HCT116 (cell line): ENCODE measurements at regions of chr1 and their contacts with region 1.

Region 1: GRCh38 chr1:206094024-206094423 is 23.2 kb downstream of the AVPR1B start:
- DNase-seq: no peak
- ATAC-seq: no peak
- H3K4me3 ChIP-seq: no peak overlapping the region
- H3K27ac ChIP-seq: no peak overlapping the region
- H3K4me1 ChIP-seq: no peaks in the 10 kb centered on the region
- H3K27me3 ChIP-seq: no peaks in the 10 kb centered on the region
- CTCF ChIP-seq: no peak
- POLR2A ChIP-seq: no peak
- RAD21 ChIP-seq: no peak

Region 2: GRCh38 chr1:206030714-206031113 is 63.3 kb before region 1 on chr1:
- CTCF ChIA-PET with region 1: no interaction called
- POLR2A ChIA-PET with region 1: no interaction called
- RAD21 ChIA-PET with region 1: no interaction called
- intact Hi-C with region 1: loop called (anchors 5 kb)
- DNase-seq: peak; percentile 74
- ATAC-seq: peak; percentile 100
- H3K4me3 ChIP-seq: no peak overlapping the region
- H3K27ac ChIP-seq: no peak overlapping the region
- H3K4me1 ChIP-seq: peaks cover 0 to 6% of the 10 kb centered on the region in 2 experiments; a peak in 2 of 4 replicates
- H3K27me3 ChIP-seq: no peaks in the 10 kb centered on the region
- CTCF ChIP-seq: peak; percentile 84 to 97 (median 94)
- POLR2A ChIP-seq: no peak
- RAD21 ChIP-seq: peak; percentile 70